ENCODE measurements at regions of chr2 and their contacts with region 1.

Region 1: GRCh38 chr2:191165176-191165643 is 14.4 kb upstream of the STAT4 start:
- DNase-seq: peak; percentile 72
- ATAC-seq: peak; percentile 77
- H3K4me3 ChIP-seq: no peak overlapping the region
- H3K27ac ChIP-seq: peak overlapping the region; percentile 30; the same call in 1 of the 2 replicates
- H3K4me1 ChIP-seq: peaks cover 16% of the 10 kb centered on the region
- H3K27me3 ChIP-seq: no peaks in the 10 kb centered on the region
- CTCF ChIP-seq: peak; percentile 80
- POLR2A ChIP-seq: 0 out of 2 replicates have a peak, but pooled peaks have one; percentile 37
- RAD21 ChIP-seq: peak; percentile 91

Region 2: GRCh38 chr2:191202881-191203397 is 37.7 kb after region 1 on chr2:
- CTCF ChIA-PET with region 1: no interaction called
- POLR2A ChIA-PET with region 1: no interaction called
- dilution Hi-C with region 1: no loop called
- in situ Hi-C with region 1: no loop called
- intact Hi-C with region 1: no loop called
- DNase-seq: peak; percentile 83
- ATAC-seq: peak; percentile 59
- H3K4me3 ChIP-seq: no peak overlapping the region
- H3K27ac ChIP-seq: peak overlapping the region; percentile 100
- H3K4me1 ChIP-seq: peaks cover 11% of the 10 kb centered on the region
- H3K27me3 ChIP-seq: no peaks in the 10 kb centered on the region
- CTCF ChIP-seq: no peak
- POLR2A ChIP-seq: no peak
- RAD21 ChIP-seq: no peak

Region 3: GRCh38 chr2:191218292-191218898 is 53.2 kb after region 1 on chr2:
- CTCF ChIA-PET with region 1: interaction called, 9 read pairs
- POLR2A ChIA-PET with region 1: no interaction called
- dilution Hi-C with region 1: no loop called
- in situ Hi-C with region 1: no loop called
- intact Hi-C with region 1: loop called (anchors 1 kb)
- DNase-seq: peak; percentile 92
- ATAC-seq: peak; percentile 86
- H3K4me3 ChIP-seq: no peak overlapping the region
- H3K27ac ChIP-seq: peak overlapping the region; percentile 59; the same call in 1 of the 2 replicates
- H3K4me1 ChIP-seq: peaks cover 8% of the 10 kb centered on the region; the same call in 1 of the 2 replicates
- H3K27me3 ChIP-seq: no peaks in the 10 kb centered on the region
- CTCF ChIP-seq: peak; percentile 82
- POLR2A ChIP-seq: no peak
- RAD21 ChIP-seq: peak; percentile 83

Region 4: GRCh38 chr2:191245046-191245868 is 80.0 kb after region 1 on chr2 and contains the start of gene MYO1B:
- CTCF ChIA-PET with region 1: no interaction called
- POLR2A ChIA-PET with region 1: no interaction called
- dilution Hi-C with region 1: no loop called
- in situ Hi-C with region 1: no loop called
- intact Hi-C with region 1: loop called (anchors 1 kb)
- DNase-seq: peak; percentile 74
- ATAC-seq: peak; percentile 81
- H3K4me3 ChIP-seq: peak within 1 kb of the TSS; percentile 97
- H3K27ac ChIP-seq: peak within 1 kb of the TSS; percentile 97
- H3K4me1 ChIP-seq: peaks cover 14% of the 10 kb centered on the region
- H3K27me3 ChIP-seq: no peaks in the 10 kb centered on the region
- CTCF ChIP-seq: peak; percentile 61
- POLR2A ChIP-seq: peak; percentile 78
- RAD21 ChIP-seq: peak; percentile 65
- total RNA-seq, gene MYO1B: 116 and 167 TPM in 2 replicates

Region 5: GRCh38 chr2:191333911-191334357 is 168.7 kb after region 1 on chr2:
- CTCF ChIA-PET with region 1: no interaction called
- POLR2A ChIA-PET with region 1: no interaction called
- dilution Hi-C with region 1: no loop called
- in situ Hi-C with region 1: no loop called
- intact Hi-C with region 1: no loop called
- DNase-seq: peak; percentile 92
- ATAC-seq: peak; percentile 72
- H3K4me3 ChIP-seq: no peak overlapping the region
- H3K27ac ChIP-seq: peak overlapping the region; percentile 80
- H3K4me1 ChIP-seq: peaks cover 16% of the 10 kb centered on the region
- H3K27me3 ChIP-seq: no peaks in the 10 kb centered on the region
- CTCF ChIP-seq: no peak
- POLR2A ChIP-seq: no peak
- RAD21 ChIP-seq: no peak

Region 6: GRCh38 chr2:191369036-191369435 is 203.8 kb after region 1 on chr2:
- CTCF ChIA-PET with region 1: no interaction called
- POLR2A ChIA-PET with region 1: no interaction called
- dilution Hi-C with region 1: no loop called
- in situ Hi-C with region 1: no loop called
- intact Hi-C with region 1: loop called (anchors 5 kb)
- DNase-seq: no peak
- ATAC-seq: no peak
- H3K4me3 ChIP-seq: no peak overlapping the region
- H3K27ac ChIP-seq: no peak overlapping the region
- H3K4me1 ChIP-seq: peaks cover 21% of the 10 kb centered on the region
- H3K27me3 ChIP-seq: no peaks in the 10 kb centered on the region
- CTCF ChIP-seq: peak; percentile 46
- POLR2A ChIP-seq: no peak
- RAD21 ChIP-seq: peak; percentile 39; the same call in 1 of the 2 replicates

Region 7: GRCh38 chr2:191501561-191502168 is 336.5 kb after region 1 on chr2:
- CTCF ChIA-PET with region 1: interaction called, 6 read pairs
- POLR2A ChIA-PET with region 1: no interaction called
- dilution Hi-C with region 1: no loop called
- in situ Hi-C with region 1: loop called (anchors 5 kb)
- intact Hi-C with region 1: loop called (anchors 1 kb)
- DNase-seq: peak; percentile 70
- ATAC-seq: peak; percentile 69
- H3K4me3 ChIP-seq: no peak overlapping the region
- H3K27ac ChIP-seq: no peak overlapping the region
- H3K4me1 ChIP-seq: peaks cover 4% of the 10 kb centered on the region; the same call in 1 of the 2 replicates
- H3K27me3 ChIP-seq: no peaks in the 10 kb centered on the region
- CTCF ChIP-seq: peak; percentile 90
- POLR2A ChIP-seq: no peak
- RAD21 ChIP-seq: peak; percentile 94

Region 8: DNA sequence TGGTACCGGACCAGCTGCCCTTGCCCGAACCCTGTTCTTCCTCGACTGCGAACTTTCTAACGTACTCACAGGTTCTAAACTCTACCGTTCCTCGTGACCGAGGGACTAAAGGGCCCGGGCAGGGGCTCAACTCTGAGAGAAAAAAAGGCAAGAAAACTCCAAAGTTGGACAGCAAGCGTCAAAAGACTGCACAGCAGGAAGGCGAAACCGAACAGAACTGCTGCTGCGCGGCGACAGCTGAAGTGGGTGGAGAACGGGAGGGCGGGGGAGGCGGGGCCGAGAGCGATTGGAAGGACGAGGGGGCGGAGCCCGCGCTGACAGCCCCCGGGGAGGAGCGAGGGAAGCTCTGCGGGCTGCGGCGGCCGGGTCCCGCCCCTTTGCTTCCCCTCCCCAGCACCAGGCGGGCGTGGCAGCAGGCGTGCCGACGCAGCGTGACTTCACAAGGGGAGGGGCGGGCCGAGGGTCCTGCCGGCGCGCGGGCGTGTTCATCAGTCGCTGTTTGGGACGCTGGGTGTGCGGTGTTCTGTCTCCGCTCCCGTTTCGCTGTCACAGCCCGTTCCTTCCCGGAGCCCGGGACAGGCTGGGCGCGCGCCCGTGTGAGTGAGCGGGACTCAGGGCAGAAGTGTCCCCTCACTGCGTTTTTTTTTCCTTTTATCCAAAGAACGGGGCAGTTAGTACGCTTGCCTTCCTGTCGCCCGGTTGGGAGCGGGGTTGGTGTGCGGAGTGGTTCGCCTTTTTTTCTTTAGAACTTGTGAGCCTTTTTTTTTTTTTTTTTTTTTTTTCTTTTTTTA is 512.6 kb after region 1 on chr2 and contains the start of gene NABP1:
- CTCF ChIA-PET with region 1: no interaction called
- POLR2A ChIA-PET with region 1: no interaction called
- dilution Hi-C with region 1: no loop called
- in situ Hi-C with region 1: no loop called
- intact Hi-C with region 1: loop called (anchors 10 kb)
- DNase-seq: peak; percentile 97
- ATAC-seq: peak; percentile 95
- H3K4me3 ChIP-seq: peak within 1 kb of the TSS; percentile 73
- H3K27ac ChIP-seq: peak within 1 kb of the TSS; percentile 89
- H3K4me1 ChIP-seq: peaks cover 5% of the 10 kb centered on the region; the same call in 1 of the 2 replicates
- H3K27me3 ChIP-seq: no peaks in the 10 kb centered on the region
- CTCF ChIP-seq: no peak
- POLR2A ChIP-seq: peak; percentile 100
- RAD21 ChIP-seq: peak; percentile 26
- total RNA-seq, gene NABP1: 57.7 and 141 TPM in 2 replicates